ENCODE measurements at regions of chr1 and their contacts with region 1.

Region 1: GRCh38 chr1:162571696-162572095 is 10.2 kb downstream of the UAP1 start:
- DNase-seq: no peak
- H3K4me3 ChIP-seq: no peak overlapping the region
- H3K27ac ChIP-seq: no peak overlapping the region
- H3K4me1 ChIP-seq: no peaks in the 10 kb centered on the region
- H3K27me3 ChIP-seq: no peaks in the 10 kb centered on the region
- CTCF ChIP-seq: no peak

Region 2: GRCh38 chr1:162248854-162249535 is 322.7 kb before region 1 on chr1:
- intact Hi-C with region 1: no loop called
- DNase-seq: no peak
- H3K4me3 ChIP-seq: no peak overlapping the region
- H3K27ac ChIP-seq: no peak overlapping the region
- H3K4me1 ChIP-seq: no peaks in the 10 kb centered on the region
- H3K27me3 ChIP-seq: no peaks in the 10 kb centered on the region
- CTCF ChIP-seq: no peak

Region 3: DNA sequence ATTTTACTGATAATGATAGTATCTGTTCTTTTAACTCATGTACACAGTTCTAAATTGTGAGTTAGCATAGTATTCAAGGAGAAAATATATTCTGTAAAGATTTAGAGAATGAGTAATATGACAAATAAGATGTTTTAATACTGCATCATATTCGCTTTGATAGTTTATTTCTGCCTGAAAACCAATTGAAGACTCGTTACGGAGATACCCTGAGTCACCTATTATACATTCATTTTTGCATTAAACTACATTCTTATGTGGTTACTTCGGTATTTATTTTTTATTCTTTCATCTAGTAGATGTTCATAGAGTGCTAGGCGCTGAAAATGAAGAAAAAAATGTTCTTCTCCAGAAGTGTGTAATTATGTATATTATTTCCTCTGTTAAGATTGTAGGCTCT is 68.8 kb before region 1 on chr1:
- intact Hi-C with region 1: loop called (anchors 10 kb)
- DNase-seq: no peak
- H3K4me3 ChIP-seq: no peak overlapping the region
- H3K27ac ChIP-seq: no peak overlapping the region
- H3K4me1 ChIP-seq: no peaks in the 10 kb centered on the region
- H3K27me3 ChIP-seq: no peaks in the 10 kb centered on the region
- CTCF ChIP-seq: no peak

Region 4: GRCh38 chr1:162633081-162633762 is 61.5 kb after region 1 on chr1:
- intact Hi-C with region 1: no loop called
- DNase-seq: no peak
- H3K4me3 ChIP-seq: peak overlapping the region; percentile 18
- H3K27ac ChIP-seq: peak overlapping the region; percentile 73
- H3K4me1 ChIP-seq: no peaks in the 10 kb centered on the region
- H3K27me3 ChIP-seq: no peaks in the 10 kb centered on the region
- CTCF ChIP-seq: no peak